HepG2 (cell line): ENCODE measurements at regions of chr15 and their contacts with region 1.

Region 1: DNA sequence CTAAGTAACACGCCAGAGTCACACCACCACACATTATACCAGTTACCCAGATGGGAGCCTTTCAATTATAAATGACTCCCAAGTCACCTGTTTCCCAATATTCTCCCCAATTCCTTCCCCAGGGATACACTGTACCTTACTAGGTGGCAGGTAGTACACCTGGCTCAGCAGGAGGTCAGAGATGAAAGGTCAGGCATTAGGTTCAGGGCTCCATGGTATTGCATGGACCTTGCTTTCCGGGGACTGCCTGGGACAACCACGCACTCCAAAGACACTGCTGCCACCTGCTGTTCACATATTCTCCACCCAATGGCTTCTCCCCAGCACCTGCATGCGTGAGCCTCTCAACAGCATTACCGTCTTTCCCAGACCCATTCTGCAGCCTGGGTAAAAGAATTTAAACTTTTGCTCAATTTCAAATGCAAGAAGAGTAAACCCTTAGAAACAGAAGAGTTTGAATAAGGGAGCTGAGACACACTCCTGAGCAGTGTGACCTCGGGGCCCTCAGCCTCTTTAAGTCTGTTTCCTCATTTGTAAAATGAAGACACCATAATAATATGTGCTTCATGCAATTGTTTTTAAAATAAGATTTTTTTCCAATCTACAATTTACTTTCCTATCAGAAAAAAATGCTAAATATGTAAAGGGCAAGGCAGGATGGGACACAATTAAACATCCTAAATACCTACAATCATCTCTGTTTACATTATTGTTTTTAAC is 28.0 kb upstream of the LACTB start:
- DNase-seq: peak; percentile 77
- ATAC-seq: peak; percentile 94
- H3K4me3 ChIP-seq: no peak overlapping the region
- H3K27ac ChIP-seq: no peak overlapping the region
- H3K4me1 ChIP-seq: peaks cover 61% of the 10 kb centered on the region
- H3K27me3 ChIP-seq: no peaks in the 10 kb centered on the region
- CTCF ChIP-seq: peak; percentile 97
- EP300 ChIP-seq: peak in 1 of 2 experiments; percentile 42; a peak in 1 of 4 replicates
- POLR2A ChIP-seq: no peak
- RAD21 ChIP-seq: peak; percentile 98

Region 2: DNA sequence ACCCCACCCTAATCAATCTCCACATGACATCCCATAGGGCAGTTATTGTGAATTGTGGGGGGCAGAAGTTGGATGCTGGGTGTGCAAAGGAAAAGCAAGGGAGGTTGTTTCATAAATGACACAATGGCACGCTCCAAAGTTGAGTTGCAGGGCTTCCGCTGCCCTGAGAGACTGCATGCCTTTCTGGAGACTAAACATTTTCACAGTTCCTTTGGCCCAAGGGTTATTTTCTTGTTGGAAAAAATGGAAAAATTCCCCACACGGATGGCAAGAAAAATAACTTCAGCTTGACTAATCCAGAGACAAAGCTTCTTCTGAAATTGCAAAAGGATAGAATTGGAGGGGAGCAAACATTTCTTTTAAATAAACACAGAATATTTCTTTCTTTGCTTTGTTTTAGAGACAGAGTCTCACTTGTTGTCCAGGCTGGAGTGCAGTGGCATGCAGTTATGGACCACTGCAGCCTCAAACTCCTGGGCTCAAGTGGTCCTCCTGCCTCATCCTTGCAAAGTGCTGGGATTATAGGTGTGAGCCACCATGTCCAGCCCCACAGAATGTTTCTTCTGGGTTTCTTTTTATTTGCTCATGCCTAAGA is 70.2 kb before region 1 on chr15:
- CTCF ChIA-PET with region 1: no interaction called
- POLR2A ChIA-PET with region 1: no interaction called
- in situ Hi-C with region 1: no loop called
- intact Hi-C with region 1: no loop called
- DNase-seq: peak; percentile 58
- ATAC-seq: peak; percentile 63
- H3K4me3 ChIP-seq: no peak overlapping the region; a peak in 1 of 6 replicates
- H3K27ac ChIP-seq: no peak overlapping the region
- H3K4me1 ChIP-seq: peaks cover 51% of the 10 kb centered on the region
- H3K27me3 ChIP-seq: no peaks in the 10 kb centered on the region
- CTCF ChIP-seq: no peak
- EP300 ChIP-seq: no peak
- POLR2A ChIP-seq: no peak
- RAD21 ChIP-seq: no peak

Region 3: GRCh38 chr15:63079938-63080626 is 13.6 kb before region 1 on chr15:
- CTCF ChIA-PET with region 1: no interaction called
- POLR2A ChIA-PET with region 1: interaction called, 15 read pairs
- in situ Hi-C with region 1: no loop called
- intact Hi-C with region 1: no loop called
- DNase-seq: peak; percentile 62
- ATAC-seq: peak; percentile 62
- H3K4me3 ChIP-seq: peak overlapping the region in 1 of 3 experiments; percentile 32; a peak in 2 of 6 replicates
- H3K27ac ChIP-seq: peak overlapping the region; percentile 38
- H3K4me1 ChIP-seq: peaks cover 56% of the 10 kb centered on the region
- H3K27me3 ChIP-seq: no peaks in the 10 kb centered on the region
- CTCF ChIP-seq: no peak
- EP300 ChIP-seq: no peak
- POLR2A ChIP-seq: no peak
- RAD21 ChIP-seq: no peak